CD4-positive, alpha-beta memory T cell (primary cell): ENCODE measurements at regions of chr17 and their contacts with region 1.

Region 1: GRCh38 chr17:82065638-82066303 is at the start of gene DUS1L:
- DNase-seq: peak; percentile 44 to 78 (median 70)
- H3K4me3 ChIP-seq: peak within 1 kb of the TSS; percentile 42 to 73
- H3K4me3 Mint-ChIP-seq: peak within 1 kb of the TSS; percentile 81 to 89 (median 86)
- H3K27ac ChIP-seq: peak within 1 kb of the TSS; percentile 66
- H3K27ac Mint-ChIP-seq: peak within 1 kb of the TSS; percentile 91 to 97 (median 94)
- H3K4me1 ChIP-seq: peaks cover 28% of the 10 kb centered on the region
- H3K4me1 Mint-ChIP-seq: peaks cover 0 to 23% (median 12%) of the 10 kb centered on the region in 4 donors
- H3K27me3 ChIP-seq: no peaks in the 10 kb centered on the region
- H3K27me3 Mint-ChIP-seq: no peaks in the 10 kb centered on the region
- total RNA-seq, gene DUS1L: 139 to 141 TPM

Region 2: DNA sequence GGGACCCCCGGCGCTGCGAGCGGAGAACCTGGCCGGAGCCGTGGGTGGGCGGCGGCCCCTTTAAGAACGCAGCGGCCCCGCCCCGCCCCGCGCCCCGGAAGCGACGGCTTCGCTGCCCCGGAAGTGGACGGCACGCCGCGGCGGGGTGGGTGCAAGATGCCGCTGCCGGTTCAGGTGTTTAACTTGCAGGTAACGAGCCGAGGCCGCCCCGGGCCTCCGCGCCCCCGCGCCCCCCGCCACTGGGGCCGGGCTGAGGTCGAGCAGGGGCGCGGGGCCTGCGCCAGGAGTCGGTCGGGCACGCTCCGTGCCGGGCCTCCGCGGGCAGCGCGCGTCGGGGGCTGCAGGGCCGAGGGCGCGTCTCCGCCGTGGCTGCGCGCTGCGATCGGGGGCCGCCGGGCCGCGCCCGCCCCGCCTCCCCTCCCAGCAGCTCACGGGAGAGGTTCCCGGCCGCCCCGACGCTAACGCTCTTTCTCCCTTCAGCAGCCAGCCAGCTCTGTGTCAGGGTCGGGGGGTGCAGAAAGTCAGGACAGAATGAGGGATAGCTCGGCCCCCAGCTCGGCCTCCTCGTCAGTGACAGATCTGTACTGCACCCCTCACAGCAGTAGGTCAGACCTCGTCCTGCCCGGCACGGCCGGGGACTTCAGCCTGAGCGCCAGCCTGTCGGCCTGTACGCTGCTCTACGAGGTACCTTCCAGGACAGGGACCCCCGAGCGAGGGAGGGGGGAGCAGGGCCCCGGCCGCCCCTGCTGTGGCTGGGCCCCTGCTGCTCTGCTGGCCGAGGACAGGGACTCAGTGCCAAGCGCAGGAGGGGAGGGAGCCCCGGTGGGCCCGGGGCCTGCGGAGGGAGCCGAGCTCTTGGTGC is 13.8 kb before region 1 on chr17 and contains the starts of genes GPS1 and RFNG:
- CTCF ChIA-PET with region 1: no interaction called
- POLR2A ChIA-PET with region 1: interaction called, 27 read pairs
- intact Hi-C with region 1: loop called (anchors 1 kb)
- DNase-seq: peak; percentile 77 to 79 (median 78)
- H3K4me3 ChIP-seq: peak within 1 kb of the TSS; percentile 29 to 69
- H3K4me3 Mint-ChIP-seq: peak within 1 kb of the TSS; percentile 79 to 91 (median 84)
- H3K27ac ChIP-seq: peak within 1 kb of the TSS; percentile 55
- H3K27ac Mint-ChIP-seq: peak within 1 kb of the TSS; percentile 38 to 91 (median 87)
- H3K4me1 ChIP-seq: peaks cover 31% of the 10 kb centered on the region
- H3K4me1 Mint-ChIP-seq: peaks cover 3 to 22% (median 11%) of the 10 kb centered on the region in 4 donors
- H3K27me3 ChIP-seq: no peaks in the 10 kb centered on the region
- H3K27me3 Mint-ChIP-seq: no peaks in the 10 kb centered on the region
- total RNA-seq, gene GPS1: 85.1 to 89.0 TPM
- total RNA-seq, gene RFNG: 37.6 to 44.0 TPM

Region 3: DNA sequence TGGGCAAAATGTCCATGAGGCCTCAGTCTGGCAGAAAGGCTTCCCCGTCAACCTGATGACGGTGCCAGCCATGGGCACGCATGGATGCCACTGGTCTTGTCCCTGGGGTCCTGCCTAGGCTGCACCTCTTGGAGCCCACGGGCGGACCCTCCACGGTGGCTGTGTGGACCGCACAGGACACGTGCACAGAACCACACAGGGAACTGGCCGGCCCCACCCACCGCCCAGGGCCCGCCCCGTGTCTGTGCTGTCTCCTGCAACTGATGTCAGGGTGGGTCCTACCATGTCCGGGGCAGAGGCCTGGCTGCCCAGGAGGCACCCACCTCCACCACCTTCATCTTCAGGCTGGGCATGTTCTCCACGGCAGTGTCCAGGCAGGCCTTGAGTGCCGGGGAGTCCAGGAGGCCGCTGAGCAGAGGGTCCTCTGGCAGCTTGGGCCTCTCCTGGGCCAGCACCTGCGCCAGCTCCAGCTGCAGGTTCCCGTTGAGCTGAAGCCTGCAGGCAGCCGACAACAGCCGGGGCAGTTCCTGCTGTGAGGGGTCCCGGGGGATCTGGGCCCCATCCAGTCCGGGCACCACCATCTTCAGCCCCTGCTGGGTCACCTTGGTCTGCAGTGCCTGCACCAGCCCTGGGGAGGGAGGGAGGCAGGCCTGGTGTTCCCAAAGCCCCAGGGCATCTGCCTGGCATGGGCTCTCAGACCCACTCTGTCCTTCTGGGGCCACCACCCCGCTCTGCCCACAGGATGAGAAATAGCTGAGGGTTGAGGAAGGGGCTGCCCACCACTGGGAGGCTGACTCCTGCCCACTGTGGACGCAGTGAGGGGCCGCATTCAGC is 20.4 kb after region 1 on chr17:
- CTCF ChIA-PET with region 1: no interaction called
- POLR2A ChIA-PET with region 1: no interaction called
- intact Hi-C with region 1: no loop called
- DNase-seq: peak in 1 of 5 donors; percentile 19
- H3K4me3 ChIP-seq: no peak overlapping the region
- H3K4me3 Mint-ChIP-seq: no peak overlapping the region
- H3K27ac ChIP-seq: no peak overlapping the region
- H3K27ac Mint-ChIP-seq: peak overlapping the region in 1 of 7 donors; percentile 35
- H3K4me1 ChIP-seq: no peaks in the 10 kb centered on the region
- H3K4me1 Mint-ChIP-seq: no peaks in the 10 kb centered on the region
- H3K27me3 ChIP-seq: no peaks in the 10 kb centered on the region
- H3K27me3 Mint-ChIP-seq: no peaks in the 10 kb centered on the region

Region 4: GRCh38 chr17:82105882-82106687 is 40.3 kb after region 1 on chr17:
- CTCF ChIA-PET with region 1: no interaction called
- POLR2A ChIA-PET with region 1: interaction called, 18 read pairs
- intact Hi-C with region 1: no loop called
- DNase-seq: peak; percentile 52 to 67 (median 54)
- H3K4me3 ChIP-seq: peak overlapping the region; percentile 63 to 84
- H3K4me3 Mint-ChIP-seq: peak overlapping the region; percentile 86 to 94 (median 89)
- H3K27ac ChIP-seq: peak overlapping the region; percentile 65
- H3K27ac Mint-ChIP-seq: peak overlapping the region; percentile 94 to 98 (median 97)
- H3K4me1 ChIP-seq: peaks cover 35% of the 10 kb centered on the region
- H3K4me1 Mint-ChIP-seq: peaks cover 9 to 51% (median 23%) of the 10 kb centered on the region in 4 donors
- H3K27me3 ChIP-seq: no peaks in the 10 kb centered on the region
- H3K27me3 Mint-ChIP-seq: no peaks in the 10 kb centered on the region